Heart right ventricle (tissue), 16 donors: ENCODE measurements at regions of chr1 and their contacts with region 1.

Region 1: DNA sequence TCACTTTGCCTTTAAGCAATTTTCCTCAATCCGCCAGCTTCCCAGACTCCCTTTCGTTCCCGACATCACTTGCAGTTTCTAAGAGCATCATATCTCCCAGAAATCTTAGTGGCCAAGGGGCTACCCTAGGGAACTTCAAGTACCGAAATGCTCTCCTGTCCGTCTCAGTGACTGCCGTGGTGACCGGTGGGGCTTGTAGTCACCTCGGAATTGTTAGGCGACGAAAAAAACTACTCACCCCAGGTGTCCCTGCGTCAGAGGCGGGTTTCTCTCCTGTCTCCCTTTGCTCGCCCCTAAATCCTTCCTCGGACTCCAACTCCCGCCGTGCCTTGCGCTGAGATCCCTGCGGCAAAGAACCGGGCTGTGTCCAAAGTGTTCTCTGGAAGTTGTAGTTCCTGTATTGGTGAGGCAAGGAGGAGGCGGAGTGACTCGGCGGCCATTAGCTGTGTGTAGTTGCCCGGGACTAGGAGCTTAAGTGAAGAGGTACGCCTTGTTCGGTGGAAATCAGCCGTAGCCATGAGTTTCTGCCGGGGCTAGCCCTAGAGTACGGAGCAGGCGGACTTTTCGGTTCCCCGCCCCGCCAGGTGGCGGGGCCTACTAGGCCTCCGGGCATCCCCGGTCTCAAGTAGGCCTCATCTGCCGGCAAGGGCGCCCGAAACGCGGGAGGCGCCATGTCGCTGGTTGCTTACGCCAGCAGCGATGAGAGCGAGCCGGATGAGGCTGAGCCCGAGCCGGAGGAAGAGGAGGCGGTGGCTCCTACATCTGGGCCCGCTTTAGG is at the start of gene PRCC:
- DNase-seq: peak; percentile 94 to 99
- ATAC-seq: peak; percentile 96 to 98 (median 97)
- H3K4me3 ChIP-seq: peak within 1 kb of the TSS; percentile 73 to 99 (median 95)
- H3K27ac ChIP-seq: peak within 1 kb of the TSS; percentile 90 to 98 (median 96)
- H3K4me1 ChIP-seq: peaks cover 12 to 53% (median 45%) of the 10 kb centered on the region in 9 donors
- H3K27me3 ChIP-seq: no peaks in the 10 kb centered on the region
- CTCF ChIP-seq: no peak
- total RNA-seq, gene PRCC: 32.1 to 56.9 (median 44.2) TPM

Region 2: DNA sequence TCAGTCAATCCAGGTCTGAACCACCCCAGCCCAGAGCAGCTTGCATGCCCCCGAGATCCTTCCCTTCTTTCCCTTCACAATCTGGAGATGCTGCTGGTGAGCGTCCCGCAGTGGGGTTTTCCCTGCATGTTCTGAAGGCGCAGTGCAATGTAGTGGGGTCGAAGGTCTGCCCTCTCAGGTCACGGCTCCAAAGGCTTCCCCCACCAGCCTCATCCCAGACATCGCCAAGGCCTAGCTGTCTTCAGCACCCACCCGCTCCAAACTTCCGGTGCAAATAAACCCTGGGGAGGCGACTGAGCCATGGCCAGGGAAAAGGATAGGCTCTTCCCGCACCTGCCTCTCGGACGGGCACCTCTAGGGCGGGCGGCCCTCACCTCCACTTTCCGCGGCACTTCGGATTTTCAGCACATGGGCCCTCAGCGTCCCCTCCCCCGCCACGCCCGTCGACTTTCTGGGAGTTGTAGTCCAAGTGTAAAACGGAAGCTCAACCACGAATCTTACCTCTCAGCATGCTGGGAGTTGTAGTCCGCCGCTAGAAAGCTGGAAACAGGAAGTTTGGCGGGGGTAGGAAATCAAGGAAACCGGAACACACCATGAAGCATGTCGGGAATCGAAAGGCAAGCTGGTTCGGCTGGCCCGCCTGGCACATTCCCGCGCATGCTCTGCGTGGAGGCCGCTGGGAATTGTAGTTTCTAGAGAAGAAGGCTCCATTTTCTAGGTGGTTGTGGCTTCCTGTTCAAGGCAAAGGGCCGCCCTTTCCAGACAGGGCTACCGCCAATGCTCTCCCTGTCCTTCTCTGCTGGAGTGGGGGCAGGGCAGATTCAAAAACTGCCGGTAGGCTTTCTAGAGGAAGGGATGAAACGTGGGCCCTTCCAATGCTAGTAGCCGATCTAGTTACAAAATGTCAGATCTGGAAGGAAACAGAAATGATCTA is 26.3 kb before region 1 on chr1 and contains the start of gene MRPL24:
- intact Hi-C with region 1: loop called in 4 of 10 experiments (anchors 1 to 5 kb)
- DNase-seq: peak; percentile 96 to 99
- ATAC-seq: peak; percentile 89 to 97 (median 94)
- H3K4me3 ChIP-seq: peak within 1 kb of the TSS; percentile 33 to 87 (median 74)
- H3K27ac ChIP-seq: peak within 1 kb of the TSS; percentile 59 to 96 (median 88)
- H3K4me1 ChIP-seq: peaks cover 5 to 51% (median 29%) of the 10 kb centered on the region in 9 donors
- H3K27me3 ChIP-seq: no peaks in the 10 kb centered on the region
- CTCF ChIP-seq: no peak
- total RNA-seq, gene MRPL24: 70.3 to 105 (median 86.7) TPM

Region 3: GRCh38 chr1:156751758-156752757 is 15.2 kb before region 1 on chr1:
- intact Hi-C with region 1: loop called in 6 of 10 experiments (anchors 1 to 2 kb)
- DNase-seq: peak; percentile 98
- ATAC-seq: peak; percentile 75 to 89 (median 84)
- H3K4me3 ChIP-seq: peak overlapping the region; percentile 79 to 99 (median 97)
- H3K27ac ChIP-seq: peak overlapping the region; percentile 94 to 100 (median 100)
- H3K4me1 ChIP-seq: peaks cover 30 to 65% (median 50%) of the 10 kb centered on the region in 9 donors
- H3K27me3 ChIP-seq: no peaks in the 10 kb centered on the region
- CTCF ChIP-seq: peak in 2 of 9 donors; percentile 11 to 16